Cardiac septum (tissue), 1 donor: ENCODE measurements at regions of chr1 and their contacts with region 1.

Region 1: DNA sequence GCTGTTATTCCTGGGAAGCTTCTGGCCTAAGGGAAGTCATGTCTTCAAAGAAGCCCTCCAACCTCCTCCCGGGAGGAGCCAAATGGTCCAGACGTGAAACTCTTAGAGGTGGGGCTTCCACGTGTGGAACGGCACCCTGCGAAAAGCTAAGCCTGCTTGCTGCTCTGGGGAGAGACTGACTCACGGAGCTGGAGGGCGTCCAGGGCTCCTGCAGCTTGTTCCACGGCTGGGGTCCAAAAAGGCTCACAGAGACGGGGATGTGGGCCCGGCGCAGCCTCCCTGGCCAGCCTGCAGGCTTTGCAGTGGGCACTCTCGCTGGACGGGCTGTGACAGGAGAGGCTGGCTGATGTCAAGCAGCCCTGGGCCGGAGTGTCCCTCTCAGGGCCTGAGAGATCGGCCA is 105.1 kb downstream of the COLGALT2 start:
- DNase-seq: peak; percentile 89

Region 2: GRCh38 chr1:183881387-183882131 is 50.9 kb before region 1 on chr1:
- intact Hi-C with region 1: no loop called
- DNase-seq: peak; percentile 82

Region 3: GRCh38 chr1:184036517-184036949 is 104.1 kb after region 1 on chr1:
- intact Hi-C with region 1: loop called (anchors 5 kb)
- DNase-seq: no peak

Region 4: GRCh38 chr1:184222652-184223052 is 290.2 kb after region 1 on chr1:
- intact Hi-C with region 1: loop called (anchors 10 kb)
- DNase-seq: no peak

Region 5: GRCh38 chr1:184691719-184692324 is 759.4 kb after region 1 on chr1:
- intact Hi-C with region 1: loop called (anchors 10 kb)
- DNase-seq: no peak